Calu3 (cell line): ENCODE measurements at regions of chr17 and their contacts with region 1.

Region 1: GRCh38 chr17:48047741-48048383 is at the start of gene NFE2L1:
- DNase-seq: peak; percentile 100
- H3K4me3 Mint-ChIP-seq: peak within 1 kb of the TSS; percentile 94
- H3K27ac Mint-ChIP-seq: peak within 1 kb of the TSS; percentile 88
- H3K4me1 Mint-ChIP-seq: peaks cover 53% of the 10 kb centered on the region
- H3K27me3 Mint-ChIP-seq: no peaks in the 10 kb centered on the region
- CTCF ChIP-seq: no peak
- total RNA-seq, gene NFE2L1: 216 and 247 TPM in 2 replicates

Region 2: GRCh38 chr17:48107168-48108132 is 59.6 kb after region 1 on chr17 and contains the start of gene SNX11:
- CTCF ChIA-PET with region 1: interaction called, 3 read pairs
- intact Hi-C with region 1: loop called (anchors 5 kb)
- DNase-seq: peak; percentile 99
- H3K4me3 Mint-ChIP-seq: peak within 1 kb of the TSS; percentile 95
- H3K27ac Mint-ChIP-seq: peak within 1 kb of the TSS; percentile 91
- H3K4me1 Mint-ChIP-seq: peaks cover 31% of the 10 kb centered on the region
- H3K27me3 Mint-ChIP-seq: no peaks in the 10 kb centered on the region
- CTCF ChIP-seq: no peak
- total RNA-seq, gene SNX11: 29.4 and 37.1 TPM in 2 replicates